MCF 10A (cell line): ENCODE measurements at regions of chr2 and their contacts with region 1.

Region 1: DNA sequence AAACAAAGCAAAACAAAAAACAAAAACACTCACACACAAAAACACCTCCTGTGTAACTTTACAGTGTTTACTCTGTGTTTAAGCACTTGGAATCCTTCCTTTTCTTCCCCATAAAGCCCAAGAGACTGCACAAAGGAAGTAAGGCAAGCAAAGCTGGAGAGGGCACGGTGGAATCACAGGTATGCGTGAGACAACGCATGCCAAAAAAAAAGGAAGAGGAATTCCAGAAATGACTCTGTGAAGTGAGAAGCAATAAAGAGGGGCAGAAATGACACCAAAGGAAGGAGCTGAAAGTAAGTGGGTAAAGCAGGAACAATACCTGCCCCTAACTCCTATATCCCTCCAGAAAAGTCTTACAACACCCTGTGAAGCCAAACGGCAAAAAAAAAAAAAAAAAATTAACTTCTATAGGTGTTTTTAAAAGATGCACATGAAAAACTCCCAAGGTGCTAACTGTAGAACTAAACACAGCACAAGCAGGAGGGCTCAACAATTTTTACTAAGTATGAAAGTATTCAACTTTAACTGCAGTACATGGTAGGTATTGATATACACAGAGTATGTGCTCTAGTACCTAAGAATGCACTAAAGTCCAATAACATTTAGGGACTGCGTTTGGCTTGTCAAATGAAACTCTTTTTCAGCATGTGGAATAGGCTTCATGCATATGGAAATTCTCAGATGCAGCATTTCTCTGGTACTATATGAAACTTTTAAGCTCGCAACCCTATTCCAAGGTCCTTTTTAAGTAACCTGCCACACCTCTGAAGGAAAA is 9.1 kb downstream of the RND3 start:
- DNase-seq: peak; percentile 60
- H3K4me3 Mint-ChIP-seq: peak overlapping the region; percentile 67
- H3K27ac Mint-ChIP-seq: peak overlapping the region; percentile 97
- H3K4me1 Mint-ChIP-seq: peaks cover 90% of the 10 kb centered on the region
- H3K27me3 Mint-ChIP-seq: no peaks in the 10 kb centered on the region
- CTCF ChIP-seq: no peak

Region 2: DNA sequence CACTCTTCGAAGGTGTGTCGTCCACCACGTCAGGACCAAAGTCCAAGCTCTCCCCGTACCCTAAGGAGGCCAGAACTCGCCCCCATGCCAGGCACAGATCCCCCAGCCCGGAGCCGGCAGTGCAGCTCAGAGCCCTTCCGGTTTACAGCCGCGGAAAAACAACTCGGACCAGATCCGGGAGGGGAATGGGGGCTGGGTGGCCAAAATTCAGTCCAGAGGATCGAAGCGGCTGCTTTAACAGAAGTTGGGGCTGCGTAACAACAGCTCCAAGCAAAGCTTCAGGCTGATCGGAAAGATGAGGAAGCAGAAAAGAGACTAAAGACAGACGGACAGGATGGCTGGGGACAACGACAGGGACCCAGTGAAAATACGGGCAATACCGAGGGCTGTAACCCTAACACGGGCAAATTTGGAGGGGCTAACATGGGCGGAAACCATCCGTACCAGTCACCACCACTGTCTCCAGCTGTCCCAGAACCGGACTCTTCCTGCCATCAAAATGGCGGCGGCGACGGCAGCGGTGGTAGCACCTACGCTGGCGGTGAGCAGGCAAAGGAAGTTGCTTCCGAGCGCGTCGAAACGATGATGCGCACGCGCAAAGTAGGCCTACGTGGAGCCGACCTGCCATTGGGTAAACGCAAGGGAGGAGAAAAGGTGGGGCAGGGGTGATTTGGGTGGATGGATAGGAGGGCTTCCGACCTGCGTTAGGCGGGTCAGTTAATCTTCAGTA is 891.0 kb before region 1 on chr2 and contains the start of gene MMADHC:
- CTCF ChIA-PET with region 1: no interaction called
- POLR2A ChIA-PET with region 1: interaction called, 41 read pairs
- intact Hi-C with region 1: no loop called
- DNase-seq: peak; percentile 95
- H3K4me3 Mint-ChIP-seq: peak within 1 kb of the TSS; percentile 93
- H3K27ac Mint-ChIP-seq: peak within 1 kb of the TSS; percentile 99
- H3K4me1 Mint-ChIP-seq: peaks cover 21% of the 10 kb centered on the region
- H3K27me3 Mint-ChIP-seq: no peaks in the 10 kb centered on the region
- CTCF ChIP-seq: no peak
- total RNA-seq, gene MMADHC: 151 and 156 TPM in 2 replicates

Region 3: GRCh38 chr2:149994057-149994753 is 484.2 kb before region 1 on chr2:
- CTCF ChIA-PET with region 1: interaction called, 3 read pairs
- POLR2A ChIA-PET with region 1: interaction called, 5 read pairs
- intact Hi-C with region 1: loop called (anchors 5 kb)
- DNase-seq: peak; percentile 98
- H3K4me3 Mint-ChIP-seq: peak overlapping the region; percentile 32
- H3K27ac Mint-ChIP-seq: peak overlapping the region; percentile 78
- H3K4me1 Mint-ChIP-seq: peaks cover 29% of the 10 kb centered on the region
- H3K27me3 Mint-ChIP-seq: no peaks in the 10 kb centered on the region
- CTCF ChIP-seq: no peak

Region 4: GRCh38 chr2:150188177-150188576 is 290.2 kb before region 1 on chr2:
- CTCF ChIA-PET with region 1: interaction called, 5 read pairs
- POLR2A ChIA-PET with region 1: interaction called, 21 read pairs
- intact Hi-C with region 1: no loop called
- DNase-seq: peak; percentile 51
- H3K4me3 Mint-ChIP-seq: peak overlapping the region; percentile 4
- H3K27ac Mint-ChIP-seq: peak overlapping the region; percentile 60
- H3K4me1 Mint-ChIP-seq: peaks cover 20% of the 10 kb centered on the region
- H3K27me3 Mint-ChIP-seq: no peaks in the 10 kb centered on the region
- CTCF ChIP-seq: no peak

Region 5: DNA sequence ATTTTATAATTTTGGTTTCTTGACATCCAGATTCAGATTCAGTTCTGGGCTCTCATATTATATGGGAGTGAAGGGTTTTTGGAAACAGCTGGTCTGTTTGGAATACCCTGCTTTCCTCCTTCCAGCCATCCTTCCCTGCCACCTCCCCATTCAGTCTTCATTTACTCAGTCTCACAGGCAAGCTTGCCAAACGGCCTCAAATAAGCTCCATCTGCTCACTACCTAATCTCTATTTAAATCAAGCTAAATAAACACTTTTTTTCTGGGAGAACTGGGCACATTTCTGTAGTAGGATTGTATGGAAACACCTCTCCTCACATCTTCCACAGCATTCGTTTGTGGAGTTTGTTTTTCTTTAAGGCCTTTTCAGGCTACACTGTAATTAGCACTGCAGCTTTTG is 138.4 kb before region 1 on chr2:
- CTCF ChIA-PET with region 1: no interaction called
- POLR2A ChIA-PET with region 1: no interaction called
- intact Hi-C with region 1: no loop called
- DNase-seq: no peak
- H3K4me3 Mint-ChIP-seq: no peak overlapping the region
- H3K27ac Mint-ChIP-seq: no peak overlapping the region
- H3K4me1 Mint-ChIP-seq: peaks cover 16% of the 10 kb centered on the region
- H3K27me3 Mint-ChIP-seq: no peaks in the 10 kb centered on the region
- CTCF ChIP-seq: no peak

Region 6: GRCh38 chr2:150357770-150358467 is 120.5 kb before region 1 on chr2:
- CTCF ChIA-PET with region 1: no interaction called
- POLR2A ChIA-PET with region 1: interaction called, 21 read pairs
- intact Hi-C with region 1: no loop called
- DNase-seq: peak; percentile 8
- H3K4me3 Mint-ChIP-seq: no peak overlapping the region
- H3K27ac Mint-ChIP-seq: no peak overlapping the region
- H3K4me1 Mint-ChIP-seq: peaks cover 9% of the 10 kb centered on the region
- H3K27me3 Mint-ChIP-seq: no peaks in the 10 kb centered on the region
- CTCF ChIP-seq: no peak

Region 7: DNA sequence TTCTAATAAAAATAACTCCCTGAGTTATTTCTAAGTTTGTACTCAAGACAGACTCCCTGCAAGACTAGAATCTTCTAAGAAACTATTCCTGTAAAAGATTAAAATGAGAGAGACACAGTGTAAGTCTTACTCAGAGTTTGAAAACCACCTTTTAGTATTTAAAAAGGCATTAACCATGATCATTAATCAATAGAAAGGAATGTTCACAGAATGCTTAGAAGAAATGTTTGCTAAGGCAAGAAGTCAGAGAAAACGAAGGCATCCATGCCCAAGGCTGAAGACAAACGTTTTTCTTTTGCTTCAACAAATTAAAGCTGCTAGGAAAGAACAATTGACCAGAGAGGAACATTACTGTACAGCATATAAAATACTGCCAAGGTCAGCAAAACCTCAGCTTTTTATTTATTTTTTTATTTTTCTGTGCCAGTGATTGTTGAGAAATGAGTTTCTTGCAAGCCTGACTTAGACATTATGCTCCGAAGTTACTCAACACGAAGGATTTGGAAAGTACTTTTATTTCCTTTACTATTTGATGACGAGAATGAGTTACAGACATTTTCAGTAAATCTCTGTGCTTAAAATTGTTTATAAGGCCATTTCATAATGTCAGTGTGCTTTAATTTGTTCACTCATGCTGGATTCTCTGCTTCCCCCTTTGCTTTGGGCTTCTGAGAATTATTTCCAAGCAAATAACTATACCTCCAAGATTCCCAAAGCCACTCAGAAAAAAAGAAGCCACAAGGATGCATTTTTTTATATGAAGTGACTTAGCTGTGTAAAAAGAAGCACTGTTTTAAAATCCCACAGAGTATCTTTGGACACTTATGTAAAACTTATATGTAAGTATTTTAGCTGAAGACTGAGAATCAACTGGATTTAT is 11.4 kb before region 1 on chr2:
- CTCF ChIA-PET with region 1: interaction called, 10 read pairs
- POLR2A ChIA-PET with region 1: interaction called, 106 read pairs
- intact Hi-C with region 1: no loop called
- DNase-seq: peak; percentile 57
- H3K4me3 Mint-ChIP-seq: no peak overlapping the region
- H3K27ac Mint-ChIP-seq: peak overlapping the region; percentile 27
- H3K4me1 Mint-ChIP-seq: peaks cover 19% of the 10 kb centered on the region
- H3K27me3 Mint-ChIP-seq: no peaks in the 10 kb centered on the region
- CTCF ChIP-seq: no peak